ENCODE measurements at regions of chr1 and their contacts with region 1.

Region 1: GRCh38 chr1:154760469-154760933 is 109.6 kb downstream of the KCNN3 start:
- DNase-seq: peak; percentile 91
- H3K4me3 ChIP-seq: peak overlapping the region; percentile 35 to 56
- H3K27ac ChIP-seq: no peak overlapping the region
- H3K4me1 ChIP-seq: no peaks in the 10 kb centered on the region; a peak in 1 of 4 replicates
- H3K27me3 ChIP-seq: peaks cover 26% of the 10 kb centered on the region
- CTCF ChIP-seq: peak; percentile 66
- EP300 ChIP-seq: no peak
- RAD21 ChIP-seq: peak; percentile 60

Region 2: GRCh38 chr1:154431586-154432373 is 328.7 kb before region 1 on chr1:
- CTCF ChIA-PET with region 1: no interaction called
- POLR2A ChIA-PET with region 1: no interaction called
- DNase-seq: no peak
- H3K4me3 ChIP-seq: no peak overlapping the region
- H3K27ac ChIP-seq: 0 out of 4 replicates have a peak overlapping the region, but pooled peaks of 1 of the 2 experiments have one; percentile 1
- H3K4me1 ChIP-seq: peaks cover 0 to 12% of the 10 kb centered on the region in 2 experiments; a peak in 1 of 4 replicates
- H3K27me3 ChIP-seq: no peaks in the 10 kb centered on the region
- CTCF ChIP-seq: no peak
- EP300 ChIP-seq: no peak
- RAD21 ChIP-seq: no peak

Region 3: DNA sequence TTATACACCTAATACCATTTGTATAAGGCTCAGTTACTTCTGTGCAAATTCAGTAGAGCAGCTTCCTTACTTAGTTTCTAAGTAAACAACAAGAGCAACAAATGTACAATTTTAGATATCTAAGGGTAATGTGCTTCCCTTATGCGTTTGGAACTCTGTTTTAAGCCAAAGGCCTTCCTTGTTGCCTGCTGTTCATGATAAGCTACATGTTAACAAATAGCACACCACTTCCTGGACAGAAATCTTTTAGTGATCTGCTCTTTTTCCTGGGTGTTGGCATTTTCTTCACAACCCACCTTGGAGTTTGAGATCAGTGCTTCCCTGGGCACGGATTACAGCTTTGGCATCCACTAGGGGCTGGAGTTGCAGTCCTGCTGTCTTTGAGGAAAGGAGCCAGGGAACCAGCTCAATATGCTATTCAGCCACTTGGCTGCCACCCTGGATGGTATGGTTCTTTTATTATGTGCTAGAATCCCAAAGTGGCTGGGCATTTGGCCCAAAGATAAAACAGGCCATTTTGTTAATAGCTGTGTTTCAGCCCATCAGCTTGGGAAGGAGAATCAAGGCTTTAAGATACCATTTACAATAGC is 96.9 kb before region 1 on chr1:
- CTCF ChIA-PET with region 1: interaction called, 50 read pairs
- POLR2A ChIA-PET with region 1: no interaction called
- DNase-seq: peak; percentile 25
- H3K4me3 ChIP-seq: no peak overlapping the region
- H3K27ac ChIP-seq: no peak overlapping the region
- H3K4me1 ChIP-seq: no peaks in the 10 kb centered on the region; a peak in 1 of 4 replicates
- H3K27me3 ChIP-seq: peaks cover 17% of the 10 kb centered on the region; the same call in 1 of the 2 replicates
- CTCF ChIP-seq: no peak
- EP300 ChIP-seq: no peak
- RAD21 ChIP-seq: no peak

Region 4: GRCh38 chr1:154729031-154729442 is 31.5 kb before region 1 on chr1:
- CTCF ChIA-PET with region 1: interaction called, 10 read pairs
- POLR2A ChIA-PET with region 1: no interaction called
- DNase-seq: no peak
- H3K4me3 ChIP-seq: no peak overlapping the region
- H3K27ac ChIP-seq: no peak overlapping the region
- H3K4me1 ChIP-seq: peaks cover 10 to 24% of the 10 kb centered on the region in 2 experiments; a peak in 2 of 4 replicates
- H3K27me3 ChIP-seq: no peaks in the 10 kb centered on the region
- CTCF ChIP-seq: no peak
- EP300 ChIP-seq: no peak
- RAD21 ChIP-seq: no peak

Region 5: GRCh38 chr1:154747740-154748404 is 12.6 kb before region 1 on chr1:
- CTCF ChIA-PET with region 1: interaction called, 64 read pairs
- POLR2A ChIA-PET with region 1: no interaction called
- DNase-seq: peak; percentile 78
- H3K4me3 ChIP-seq: no peak overlapping the region
- H3K27ac ChIP-seq: peak overlapping the region in 1 of 2 experiments; percentile 85; a peak in 2 of 4 replicates
- H3K4me1 ChIP-seq: peaks cover 0 to 53% of the 10 kb centered on the region in 2 experiments; a peak in 2 of 4 replicates
- H3K27me3 ChIP-seq: peaks cover 56% of the 10 kb centered on the region
- CTCF ChIP-seq: no peak
- EP300 ChIP-seq: peak in 1 of 2 experiments; percentile 31; a peak in 1 of 4 replicates
- RAD21 ChIP-seq: no peak

Region 6: GRCh38 chr1:154784924-154785531 is 24.5 kb after region 1 on chr1:
- CTCF ChIA-PET with region 1: interaction called, 13 read pairs
- POLR2A ChIA-PET with region 1: no interaction called
- DNase-seq: no peak
- H3K4me3 ChIP-seq: no peak overlapping the region
- H3K27ac ChIP-seq: no peak overlapping the region
- H3K4me1 ChIP-seq: no peaks in the 10 kb centered on the region; a peak in 1 of 4 replicates
- H3K27me3 ChIP-seq: no peaks in the 10 kb centered on the region; the same call in 1 of the 2 replicates
- CTCF ChIP-seq: no peak
- EP300 ChIP-seq: no peak
- RAD21 ChIP-seq: no peak

Region 7: DNA sequence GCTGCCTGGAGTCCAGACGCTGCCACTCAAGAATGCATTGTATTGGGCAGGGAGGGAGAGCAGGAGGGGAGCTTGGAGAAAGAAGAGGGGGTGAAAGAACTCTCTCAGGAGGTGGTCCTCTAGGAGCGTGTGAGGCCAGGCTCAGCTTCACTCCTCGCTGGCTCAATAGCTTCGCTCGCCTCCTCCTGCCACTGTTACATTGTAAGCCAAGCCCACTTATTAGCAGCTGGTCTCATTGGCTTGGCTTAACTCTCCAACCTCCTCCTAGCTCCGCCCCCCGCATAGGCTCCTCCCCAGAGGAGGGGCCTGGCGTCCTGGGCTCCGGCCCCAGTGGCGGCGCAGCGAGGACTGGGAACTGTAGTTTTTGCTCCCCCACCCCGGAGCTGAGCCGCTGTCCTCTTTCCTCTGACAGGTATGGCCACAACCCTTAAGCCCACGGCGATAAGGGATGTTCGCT is 109.6 kb after region 1 on chr1 and contains the start of gene KCNN3:
- CTCF ChIA-PET with region 1: interaction called, 31 read pairs
- POLR2A ChIA-PET with region 1: no interaction called
- DNase-seq: peak; percentile 96
- H3K4me3 ChIP-seq: peak within 1 kb of the TSS; percentile 37 to 59
- H3K27ac ChIP-seq: no peak within 1 kb of the TSS; a peak in 1 of 4 replicates
- H3K4me1 ChIP-seq: peaks cover 14 to 40% of the 10 kb centered on the region in 2 experiments
- H3K27me3 ChIP-seq: peaks cover 8% of the 10 kb centered on the region; the same call in 1 of the 2 replicates
- CTCF ChIP-seq: no peak
- EP300 ChIP-seq: no peak
- RAD21 ChIP-seq: no peak; the same call in 1 of the 2 replicates
- polyA plus RNA-seq, gene KCNN3: 0.10 and 0.16 TPM in 2 replicates